ENCODE measurements at regions of chr1 and their contacts with region 1.

Region 1: DNA sequence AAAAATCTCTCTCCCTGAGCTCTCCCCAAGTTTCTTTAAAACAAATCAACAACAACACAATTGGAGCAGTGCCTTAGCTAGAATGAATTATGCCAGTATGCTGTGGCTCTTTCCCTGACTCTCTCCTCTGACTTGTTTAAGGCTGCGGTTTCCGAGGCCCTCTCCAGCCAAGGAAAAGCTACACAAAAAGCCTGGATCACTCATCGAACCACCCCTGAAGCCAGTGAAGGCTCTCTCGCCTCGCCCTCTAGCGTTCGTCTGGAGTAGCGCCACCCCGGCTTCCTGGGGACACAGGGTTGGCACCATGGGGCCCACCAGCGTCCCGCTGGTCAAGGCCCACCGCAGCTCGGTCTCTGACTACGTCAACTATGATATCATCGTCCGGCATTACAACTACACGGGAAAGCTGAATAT is 1.9 kb downstream of the S1PR1 start:
- DNase-seq: peak; percentile 61 to 81
- H3K4me3 ChIP-seq: no peak overlapping the region
- H3K27ac ChIP-seq: no peak overlapping the region
- H3K4me1 ChIP-seq: peaks cover 20% of the 10 kb centered on the region
- H3K27me3 ChIP-seq: peaks cover 4% of the 10 kb centered on the region; the same call in 1 of the 2 replicates
- CTCF ChIP-seq: peak; percentile 98

Region 2: DNA sequence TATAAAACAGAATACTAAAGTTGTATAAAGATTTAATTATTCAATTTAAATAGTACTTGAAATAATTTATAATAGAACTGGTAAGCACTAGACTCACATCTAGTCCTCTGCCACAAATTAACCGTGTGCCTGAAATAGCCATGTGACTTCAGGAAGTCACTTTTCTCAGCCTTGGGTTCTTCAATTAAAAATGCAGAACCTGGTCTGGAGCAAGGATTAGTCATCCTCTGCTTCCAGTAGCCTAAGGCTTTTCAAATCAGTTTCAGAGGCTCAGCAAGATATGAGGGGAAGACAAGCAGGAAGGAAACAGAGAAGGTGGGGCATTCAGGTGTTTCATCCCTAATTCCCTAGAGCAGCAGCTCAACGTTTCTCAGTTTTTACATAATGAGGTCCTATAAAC is 236.1 kb before region 1 on chr1:
- CTCF ChIA-PET with region 1: no interaction called
- POLR2A ChIA-PET with region 1: no interaction called
- intact Hi-C with region 1: loop called (anchors 5 kb)
- DNase-seq: peak; percentile 5 to 79
- H3K4me3 ChIP-seq: no peak overlapping the region
- H3K27ac ChIP-seq: peak overlapping the region; percentile 7; the same call in 1 of the 2 replicates
- H3K4me1 ChIP-seq: peaks cover 34% of the 10 kb centered on the region
- H3K27me3 ChIP-seq: no peaks in the 10 kb centered on the region
- CTCF ChIP-seq: no peak

Region 3: DNA sequence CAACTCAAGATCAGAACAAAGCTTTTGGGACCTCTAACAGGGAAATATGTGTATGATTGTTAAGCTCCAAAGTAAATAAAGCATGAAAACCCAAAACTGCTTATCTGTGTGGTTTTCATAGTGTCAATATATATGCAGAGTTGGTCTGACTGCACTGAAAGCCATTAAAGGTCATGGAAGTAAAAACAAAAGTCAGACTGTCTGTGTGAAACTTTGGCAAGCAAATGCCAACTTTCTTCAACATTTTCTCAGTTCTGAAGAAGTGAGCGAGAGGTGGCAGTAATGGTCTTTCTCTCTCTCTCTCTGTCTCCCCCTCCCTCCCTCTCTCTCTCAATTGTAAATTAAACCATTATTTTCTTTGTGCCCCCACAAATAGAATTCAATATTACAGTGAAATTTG is 101.9 kb before region 1 on chr1:
- CTCF ChIA-PET with region 1: interaction called, 3 read pairs
- POLR2A ChIA-PET with region 1: no interaction called
- intact Hi-C with region 1: loop called (anchors 10 kb)
- DNase-seq: no peak
- H3K4me3 ChIP-seq: no peak overlapping the region
- H3K27ac ChIP-seq: no peak overlapping the region
- H3K4me1 ChIP-seq: peaks cover 9% of the 10 kb centered on the region; the same call in 1 of the 2 replicates
- H3K27me3 ChIP-seq: no peaks in the 10 kb centered on the region
- CTCF ChIP-seq: no peak

Region 4: DNA sequence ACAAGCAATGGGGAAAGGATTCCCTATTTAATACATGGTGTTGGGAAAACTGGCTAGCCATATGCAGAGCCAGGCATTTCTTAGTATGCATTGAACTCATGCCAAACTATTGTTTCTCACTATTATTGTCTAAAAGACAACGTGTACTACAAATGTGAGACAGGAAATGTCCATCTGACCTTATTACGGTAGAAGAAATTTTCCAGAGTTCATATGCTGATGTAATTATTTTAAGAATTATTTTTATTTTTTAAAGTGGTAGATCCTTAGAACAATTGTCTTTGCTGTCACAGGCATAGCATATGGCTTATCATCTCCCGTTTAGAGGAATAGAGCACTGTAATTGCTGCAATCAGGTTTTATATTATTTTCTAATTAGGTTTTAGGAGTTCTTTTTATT is 77.1 kb before region 1 on chr1:
- CTCF ChIA-PET with region 1: no interaction called
- POLR2A ChIA-PET with region 1: no interaction called
- intact Hi-C with region 1: no loop called
- DNase-seq: no peak
- H3K4me3 ChIP-seq: no peak overlapping the region
- H3K27ac ChIP-seq: no peak overlapping the region
- H3K4me1 ChIP-seq: no peaks in the 10 kb centered on the region
- H3K27me3 ChIP-seq: no peaks in the 10 kb centered on the region
- CTCF ChIP-seq: no peak

Region 5: DNA sequence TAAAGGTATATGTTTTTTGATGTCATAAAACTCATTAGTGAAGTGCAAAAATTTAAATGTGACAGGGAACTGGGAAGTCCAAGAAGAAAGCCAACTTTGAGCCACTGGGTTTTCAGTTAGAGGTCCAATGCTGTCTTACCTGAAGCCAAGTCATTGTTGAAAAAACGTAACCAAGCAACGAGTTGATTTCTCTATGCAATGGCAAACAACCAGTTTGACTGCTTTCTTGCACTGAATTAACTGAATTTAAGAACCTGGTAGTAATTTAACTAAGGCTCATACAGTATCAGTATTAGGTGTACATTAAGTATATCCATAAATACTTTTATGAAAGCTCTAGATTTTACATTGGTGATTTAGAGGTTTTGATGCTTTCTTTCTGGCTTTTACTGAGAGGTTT is 22.1 kb before region 1 on chr1:
- CTCF ChIA-PET with region 1: no interaction called
- POLR2A ChIA-PET with region 1: no interaction called
- intact Hi-C with region 1: loop called (anchors 2 kb)
- DNase-seq: peak; percentile 27 to 83
- H3K4me3 ChIP-seq: no peak overlapping the region
- H3K27ac ChIP-seq: no peak overlapping the region
- H3K4me1 ChIP-seq: peaks cover 13% of the 10 kb centered on the region
- H3K27me3 ChIP-seq: no peaks in the 10 kb centered on the region
- CTCF ChIP-seq: no peak

Region 6: DNA sequence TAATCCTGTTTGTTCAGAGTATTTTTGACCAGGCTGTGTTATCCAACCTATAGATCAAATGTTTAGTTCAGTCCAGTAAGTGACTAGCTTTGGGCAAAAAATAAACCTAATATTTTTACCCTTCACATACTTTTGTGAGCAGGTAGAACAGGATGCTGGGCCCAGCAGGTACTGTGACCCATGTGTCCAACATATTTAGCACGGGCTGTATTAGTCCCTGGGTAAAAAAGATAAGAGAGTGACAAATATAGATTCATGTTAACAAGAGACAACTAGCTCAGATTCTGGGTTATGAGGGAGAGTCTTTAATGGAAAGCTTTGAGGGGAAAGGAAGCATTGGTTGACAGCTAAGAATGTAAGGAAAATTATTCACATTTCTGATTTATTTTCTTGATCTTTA is 714.9 kb after region 1 on chr1:
- CTCF ChIA-PET with region 1: no interaction called
- POLR2A ChIA-PET with region 1: no interaction called
- intact Hi-C with region 1: no loop called
- DNase-seq: no peak
- H3K4me3 ChIP-seq: no peak overlapping the region
- H3K27ac ChIP-seq: no peak overlapping the region
- H3K4me1 ChIP-seq: no peaks in the 10 kb centered on the region
- H3K27me3 ChIP-seq: no peaks in the 10 kb centered on the region
- CTCF ChIP-seq: no peak